Activated CD8-positive, alpha-beta T cell treated with anti-CD3 and anti-CD28 coated beads for 36 hours (primary cell): ENCODE measurements at regions of chr19 and their contacts with region 1.

Region 1: GRCh38 chr19:12346896-12347295 is 13.5 kb upstream of the ZNF563 start:
- DNase-seq: peak; percentile 44
- ATAC-seq: peak; percentile 34
- H3K4me3 Mint-ChIP-seq: no peak overlapping the region
- H3K27ac Mint-ChIP-seq: no peak overlapping the region
- H3K4me1 Mint-ChIP-seq: no peaks in the 10 kb centered on the region
- H3K27me3 Mint-ChIP-seq: no peaks in the 10 kb centered on the region
- CTCF ChIP-seq: peak; percentile 30

Region 2: GRCh38 chr19:12202250-12202649 is 144.6 kb before region 1 on chr19:
- CTCF ChIA-PET with region 1: no interaction called
- POLR2A ChIA-PET with region 1: no interaction called
- intact Hi-C with region 1: loop called (anchors 5 kb)
- DNase-seq: peak; percentile 83
- ATAC-seq: peak; percentile 89
- H3K4me3 Mint-ChIP-seq: no peak overlapping the region
- H3K27ac Mint-ChIP-seq: no peak overlapping the region
- H3K4me1 Mint-ChIP-seq: peaks cover 16% of the 10 kb centered on the region
- H3K27me3 Mint-ChIP-seq: no peaks in the 10 kb centered on the region
- CTCF ChIP-seq: no peak